Activated B cell treated with CpG ODN at 0.5 μM for 24 hours (primary cell): ENCODE measurements at regions of chr9 and their contacts with region 1.

Region 1: DNA sequence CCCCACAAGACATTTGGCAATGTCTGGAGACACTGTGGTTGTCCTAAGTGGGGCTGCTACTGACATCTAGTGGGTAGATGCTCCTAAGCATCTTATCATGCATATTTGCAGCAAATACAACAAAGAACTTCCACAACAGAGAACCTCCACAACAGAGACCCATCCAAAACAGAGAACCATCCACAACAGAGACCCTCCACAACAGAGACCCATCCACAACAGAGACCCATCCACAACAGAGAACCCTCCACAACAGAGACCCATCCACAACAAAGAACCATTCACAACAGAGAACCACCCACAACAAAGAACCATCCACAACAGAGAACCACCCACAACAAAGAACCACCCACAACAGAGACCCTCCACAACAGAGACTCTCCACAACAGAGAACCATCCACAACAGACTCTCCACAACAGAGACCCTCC is 32.8 kb downstream of the ARPC5L start:
- DNase-seq: no peak
- ATAC-seq: peak; percentile 85
- H3K4me3 Mint-ChIP-seq: no peak overlapping the region
- H3K27ac Mint-ChIP-seq: peak overlapping the region; percentile 50
- H3K4me1 Mint-ChIP-seq: no peaks in the 10 kb centered on the region
- H3K27me3 Mint-ChIP-seq: no peaks in the 10 kb centered on the region
- CTCF ChIP-seq: no peak

Region 2: GRCh38 chr9:124868511-124869465 is 26.0 kb before region 1 on chr9:
- CTCF ChIA-PET with region 1: interaction called, 3 read pairs
- POLR2A ChIA-PET with region 1: interaction called, 5 read pairs
- intact Hi-C with region 1: loop called (anchors 2 kb)
- DNase-seq: peak; percentile 97
- ATAC-seq: peak; percentile 69
- H3K4me3 Mint-ChIP-seq: peak overlapping the region; percentile 91
- H3K27ac Mint-ChIP-seq: peak overlapping the region; percentile 97
- H3K4me1 Mint-ChIP-seq: peaks cover 54% of the 10 kb centered on the region
- H3K27me3 Mint-ChIP-seq: no peaks in the 10 kb centered on the region
- CTCF ChIP-seq: no peak